RWPE1 (cell line): ENCODE measurements at regions of chr2 and their contacts with region 1.

Region 1: DNA sequence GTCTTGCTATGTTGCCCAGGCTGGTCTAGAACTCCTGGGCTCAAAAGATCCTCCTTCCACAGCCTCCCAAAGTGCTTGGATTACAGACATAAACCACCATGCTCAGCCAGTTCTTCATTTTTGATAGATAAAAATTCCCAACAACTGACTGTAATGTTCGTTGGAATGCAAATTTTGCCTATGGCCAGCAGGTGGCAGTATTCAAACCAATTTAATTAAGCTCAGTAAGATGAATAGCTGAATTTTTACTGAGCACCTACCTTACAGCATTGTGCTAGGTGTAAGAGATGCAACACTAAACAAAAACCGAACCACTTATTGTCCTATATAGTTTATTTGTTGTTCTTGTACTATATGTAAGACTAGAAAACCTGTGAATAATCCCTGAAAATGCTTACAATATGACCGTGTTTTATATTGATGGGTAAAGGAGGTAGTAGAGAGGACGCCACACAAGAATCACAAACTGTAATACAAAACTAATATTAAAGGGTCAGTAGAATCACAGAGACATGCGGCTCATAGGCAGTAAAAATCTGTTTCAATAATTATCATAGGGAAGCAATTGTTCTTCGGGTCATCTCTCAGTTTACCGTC is 8.2 kb upstream of the TMEM182 start:
- DNase-seq: peak; percentile 25
- H3K27ac ChIP-seq: no peak overlapping the region
- CTCF ChIP-seq: peak; percentile 75

Region 2: GRCh38 chr2:102765061-102765460 is 11.4 kb after region 1 on chr2:
- CTCF ChIA-PET with region 1: interaction called, 10 read pairs
- POLR2A ChIA-PET with region 1: no interaction called
- DNase-seq: no peak
- H3K27ac ChIP-seq: no peak overlapping the region
- CTCF ChIP-seq: no peak